ENCODE measurements at regions of chr9 and their contacts with region 1.

Region 1: DNA sequence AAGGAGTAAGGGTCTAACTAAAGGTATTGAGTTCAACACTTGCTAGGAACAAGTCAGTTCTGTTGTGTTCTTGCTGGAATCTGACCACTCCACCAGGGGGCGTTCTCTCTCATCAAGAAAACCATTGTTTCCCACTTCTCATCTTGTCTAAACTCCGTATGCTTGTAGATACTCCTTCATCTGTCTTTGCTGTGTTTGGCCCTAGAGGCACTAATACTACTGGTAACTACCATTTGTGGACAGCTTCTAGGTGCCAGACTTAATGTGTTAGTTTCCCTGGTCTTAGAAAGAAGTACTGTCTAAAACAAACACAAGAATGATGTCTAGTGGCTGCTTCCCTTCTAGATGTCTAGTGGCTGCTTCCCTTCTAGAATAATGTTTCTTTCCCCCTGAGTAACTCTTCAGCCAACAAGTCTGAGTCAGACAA is 18.7 kb upstream of the PTPDC1 start:
- DNase-seq: peak; percentile 71
- ATAC-seq: peak; percentile 69
- H3K4me3 ChIP-seq: no peak overlapping the region
- H3K27ac ChIP-seq: no peak overlapping the region
- H3K4me1 ChIP-seq: no peaks in the 10 kb centered on the region
- H3K27me3 ChIP-seq: no peaks in the 10 kb centered on the region
- CTCF ChIP-seq: peak; percentile 89

Region 2: DNA sequence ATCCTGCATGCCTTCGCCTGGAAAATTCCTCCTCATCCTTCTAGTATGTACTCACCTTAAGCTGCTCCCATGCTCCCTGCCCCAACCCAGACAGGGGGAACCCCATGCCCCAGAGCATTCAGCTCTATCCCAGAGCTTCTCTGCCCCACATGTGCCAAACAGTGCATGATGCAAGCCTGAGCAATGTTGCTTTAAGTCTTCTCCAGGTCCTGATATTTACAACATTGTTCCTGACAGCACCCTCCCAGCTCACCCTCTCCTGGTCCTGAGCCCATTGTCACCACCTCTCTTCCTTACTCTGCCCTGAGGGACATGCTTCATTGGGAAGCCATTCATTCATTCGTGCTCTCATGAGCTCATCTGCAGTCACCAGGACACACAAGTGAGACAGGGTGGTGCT is 87.0 kb before region 1 on chr9:
- CTCF ChIA-PET with region 1: no interaction called
- POLR2A ChIA-PET with region 1: no interaction called
- intact Hi-C with region 1: no loop called
- DNase-seq: peak; percentile 11
- ATAC-seq: no peak
- H3K4me3 ChIP-seq: no peak overlapping the region
- H3K27ac ChIP-seq: no peak overlapping the region
- H3K4me1 ChIP-seq: no peaks in the 10 kb centered on the region
- H3K27me3 ChIP-seq: no peaks in the 10 kb centered on the region
- CTCF ChIP-seq: no peak

Region 3: GRCh38 chr9:94014065-94014654 is 51.4 kb before region 1 on chr9:
- CTCF ChIA-PET with region 1: no interaction called
- POLR2A ChIA-PET with region 1: no interaction called
- intact Hi-C with region 1: loop called (anchors 1 kb)
- DNase-seq: peak; percentile 56
- ATAC-seq: peak; percentile 52
- H3K4me3 ChIP-seq: no peak overlapping the region
- H3K27ac ChIP-seq: no peak overlapping the region
- H3K4me1 ChIP-seq: no peaks in the 10 kb centered on the region; the same call in 1 of the 2 replicates
- H3K27me3 ChIP-seq: no peaks in the 10 kb centered on the region
- CTCF ChIP-seq: peak; percentile 66

Region 4: DNA sequence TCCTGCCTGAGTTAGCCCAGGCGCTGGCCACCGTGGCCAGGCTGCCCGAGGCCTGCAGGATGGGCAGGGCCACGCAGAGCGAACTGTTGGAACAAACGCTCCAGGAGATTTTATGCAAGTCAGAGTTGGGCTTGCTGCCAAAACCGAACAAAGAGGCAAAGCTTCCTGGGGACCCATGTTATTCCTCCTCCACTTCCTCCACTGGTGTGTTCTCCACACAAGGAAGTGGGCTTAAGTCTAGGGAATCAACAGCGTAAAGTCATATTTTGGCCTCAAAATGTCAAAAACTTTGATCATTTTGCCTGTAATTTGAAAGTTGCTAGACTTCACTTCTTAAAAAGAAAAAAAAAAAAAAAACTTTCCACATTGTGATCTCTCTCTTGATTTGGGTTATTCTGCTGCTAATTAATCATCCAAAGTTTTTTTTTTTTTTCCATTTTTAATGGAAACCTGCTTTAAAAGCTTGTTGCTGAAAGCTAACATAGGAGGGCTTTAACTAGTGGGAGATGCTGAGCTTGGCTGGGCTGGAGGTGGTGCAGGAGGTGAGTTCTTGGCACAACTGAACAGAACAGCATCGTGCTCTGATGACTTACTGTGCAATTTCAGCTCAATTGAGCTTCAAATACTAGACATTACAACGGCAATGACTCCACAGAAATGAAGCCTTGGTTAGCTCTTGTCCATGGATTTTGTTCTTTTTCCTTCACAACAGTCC is 91.7 kb after region 1 on chr9:
- CTCF ChIA-PET with region 1: no interaction called
- POLR2A ChIA-PET with region 1: interaction called, 22 read pairs
- intact Hi-C with region 1: no loop called
- DNase-seq: peak; percentile 38
- ATAC-seq: peak; percentile 54
- H3K4me3 ChIP-seq: no peak overlapping the region
- H3K27ac ChIP-seq: no peak overlapping the region
- H3K4me1 ChIP-seq: peaks cover 10% of the 10 kb centered on the region; the same call in 1 of the 2 replicates
- H3K27me3 ChIP-seq: no peaks in the 10 kb centered on the region
- CTCF ChIP-seq: no peak

Region 5: DNA sequence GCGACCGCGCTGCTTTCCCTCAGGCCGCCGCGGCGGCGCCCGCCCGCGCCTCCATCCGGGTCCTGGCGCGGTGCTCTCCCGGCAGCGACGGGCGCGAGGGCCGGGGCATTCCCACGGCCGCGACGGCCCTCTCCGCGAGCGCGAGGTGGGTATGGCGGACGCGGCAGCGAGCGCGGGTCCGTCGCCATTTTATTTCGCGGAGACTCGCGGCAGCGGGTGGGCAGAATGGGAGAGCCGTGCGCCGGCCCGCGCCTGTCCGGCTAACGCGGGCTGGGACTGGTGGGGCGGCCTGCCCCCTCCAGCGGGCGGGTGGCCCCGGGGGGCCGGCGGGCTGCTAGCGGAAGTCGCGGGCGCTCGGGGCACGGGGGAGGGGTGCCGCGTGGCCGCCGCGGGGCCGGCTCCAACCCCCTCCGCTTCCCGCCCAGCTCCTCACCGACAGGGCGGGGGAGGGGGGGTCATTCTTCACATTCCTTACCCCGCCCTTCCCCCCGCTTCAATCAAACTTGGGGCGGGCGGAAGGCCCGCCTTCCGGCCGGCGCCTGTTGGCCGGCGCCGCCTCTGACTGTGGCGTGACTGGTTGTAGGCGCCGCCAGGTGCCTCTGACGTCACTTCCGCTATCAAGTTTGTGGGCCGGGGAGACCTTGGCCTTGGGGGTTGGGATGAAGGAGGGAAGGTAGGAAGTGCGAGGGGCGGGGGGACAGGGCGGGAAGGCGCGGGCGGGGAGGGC is 100.9 kb after region 1 on chr9:
- CTCF ChIA-PET with region 1: no interaction called
- POLR2A ChIA-PET with region 1: no interaction called
- intact Hi-C with region 1: loop called (anchors 2 kb)
- DNase-seq: peak; percentile 97
- ATAC-seq: peak; percentile 64
- H3K4me3 ChIP-seq: peak overlapping the region; percentile 99
- H3K27ac ChIP-seq: peak overlapping the region; percentile 95
- H3K4me1 ChIP-seq: peaks cover 17% of the 10 kb centered on the region; the same call in 1 of the 2 replicates
- H3K27me3 ChIP-seq: no peaks in the 10 kb centered on the region
- CTCF ChIP-seq: no peak

Region 6: DNA sequence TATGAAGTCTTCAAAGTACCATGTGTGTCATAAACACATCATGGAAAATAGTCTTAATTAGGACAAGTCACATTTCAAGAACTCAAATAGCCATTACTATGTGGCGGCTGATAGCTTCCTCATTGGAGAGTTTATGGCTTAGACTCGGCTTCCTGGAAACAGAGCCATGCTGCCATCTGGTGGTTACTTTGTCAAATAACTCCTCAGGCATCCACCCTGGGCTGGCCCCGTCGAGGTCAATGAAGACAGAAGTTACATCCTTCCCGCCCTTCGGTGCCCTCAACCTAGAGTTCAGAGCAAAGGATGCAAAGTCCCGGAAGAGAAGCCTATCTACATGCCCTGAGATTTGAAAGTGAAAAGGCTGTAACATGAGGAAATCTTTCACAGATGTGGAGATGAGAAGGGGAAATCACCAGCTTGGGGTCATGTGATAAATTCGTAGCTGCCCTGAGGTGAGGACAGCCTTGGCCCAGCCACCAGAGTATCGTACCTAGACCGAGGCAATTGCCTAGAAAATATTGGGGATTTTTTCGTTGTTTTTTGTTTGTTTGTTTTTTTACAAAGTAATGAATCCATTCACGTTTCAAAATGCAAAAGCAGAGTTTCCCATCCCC is 148.1 kb after region 1 on chr9:
- CTCF ChIA-PET with region 1: no interaction called
- POLR2A ChIA-PET with region 1: no interaction called
- intact Hi-C with region 1: loop called (anchors 1 kb)
- DNase-seq: peak; percentile 76
- ATAC-seq: peak; percentile 88
- H3K4me3 ChIP-seq: no peak overlapping the region
- H3K27ac ChIP-seq: no peak overlapping the region
- H3K4me1 ChIP-seq: no peaks in the 10 kb centered on the region
- H3K27me3 ChIP-seq: no peaks in the 10 kb centered on the region
- CTCF ChIP-seq: peak; percentile 80